HepG2 (cell line): ENCODE measurements at regions of chr11 and their contacts with region 1.

Region 1: GRCh38 chr11:61627567-61628445 is 46.9 kb upstream of the SYT7 start:
- DNase-seq: peak; percentile 57
- ATAC-seq: peak; percentile 93
- H3K4me3 ChIP-seq: no peak overlapping the region
- H3K27ac ChIP-seq: no peak overlapping the region
- H3K4me1 ChIP-seq: peaks cover 18% of the 10 kb centered on the region
- H3K27me3 ChIP-seq: peaks cover 0 to 2% of the 10 kb centered on the region in 2 experiments; a peak in 2 of 5 replicates
- CTCF ChIP-seq: peak; percentile 94
- EP300 ChIP-seq: no peak
- POLR2A ChIP-seq: no peak
- RAD21 ChIP-seq: peak; percentile 91

Region 2: GRCh38 chr11:61477727-61478148 is 150.1 kb before region 1 on chr11:
- CTCF ChIA-PET with region 1: interaction called, 3 read pairs
- POLR2A ChIA-PET with region 1: no interaction called
- in situ Hi-C with region 1: no loop called
- intact Hi-C with region 1: loop called (anchors 1 kb)
- DNase-seq: no peak
- ATAC-seq: peak; percentile 41
- H3K4me3 ChIP-seq: no peak overlapping the region
- H3K27ac ChIP-seq: no peak overlapping the region
- H3K4me1 ChIP-seq: peaks cover 27% of the 10 kb centered on the region
- H3K27me3 ChIP-seq: peaks cover 2 to 22% of the 10 kb centered on the region in 2 experiments; a peak in 4 of 5 replicates
- CTCF ChIP-seq: peak; percentile 94
- EP300 ChIP-seq: no peak
- POLR2A ChIP-seq: no peak
- RAD21 ChIP-seq: peak; percentile 94

Region 3: GRCh38 chr11:61532139-61533038 is 95.4 kb before region 1 on chr11:
- CTCF ChIA-PET with region 1: no interaction called
- POLR2A ChIA-PET with region 1: no interaction called
- in situ Hi-C with region 1: no loop called
- intact Hi-C with region 1: loop called (anchors 1 kb)
- DNase-seq: peak; percentile 34
- ATAC-seq: peak; percentile 48
- H3K4me3 ChIP-seq: no peak overlapping the region
- H3K27ac ChIP-seq: no peak overlapping the region
- H3K4me1 ChIP-seq: peaks cover 42% of the 10 kb centered on the region
- H3K27me3 ChIP-seq: peaks cover 0 to 6% of the 10 kb centered on the region in 2 experiments; a peak in 1 of 5 replicates
- CTCF ChIP-seq: peak; percentile 71
- EP300 ChIP-seq: no peak
- POLR2A ChIP-seq: no peak
- RAD21 ChIP-seq: peak; percentile 46; the same call in 1 of the 2 replicates

Region 4: DNA sequence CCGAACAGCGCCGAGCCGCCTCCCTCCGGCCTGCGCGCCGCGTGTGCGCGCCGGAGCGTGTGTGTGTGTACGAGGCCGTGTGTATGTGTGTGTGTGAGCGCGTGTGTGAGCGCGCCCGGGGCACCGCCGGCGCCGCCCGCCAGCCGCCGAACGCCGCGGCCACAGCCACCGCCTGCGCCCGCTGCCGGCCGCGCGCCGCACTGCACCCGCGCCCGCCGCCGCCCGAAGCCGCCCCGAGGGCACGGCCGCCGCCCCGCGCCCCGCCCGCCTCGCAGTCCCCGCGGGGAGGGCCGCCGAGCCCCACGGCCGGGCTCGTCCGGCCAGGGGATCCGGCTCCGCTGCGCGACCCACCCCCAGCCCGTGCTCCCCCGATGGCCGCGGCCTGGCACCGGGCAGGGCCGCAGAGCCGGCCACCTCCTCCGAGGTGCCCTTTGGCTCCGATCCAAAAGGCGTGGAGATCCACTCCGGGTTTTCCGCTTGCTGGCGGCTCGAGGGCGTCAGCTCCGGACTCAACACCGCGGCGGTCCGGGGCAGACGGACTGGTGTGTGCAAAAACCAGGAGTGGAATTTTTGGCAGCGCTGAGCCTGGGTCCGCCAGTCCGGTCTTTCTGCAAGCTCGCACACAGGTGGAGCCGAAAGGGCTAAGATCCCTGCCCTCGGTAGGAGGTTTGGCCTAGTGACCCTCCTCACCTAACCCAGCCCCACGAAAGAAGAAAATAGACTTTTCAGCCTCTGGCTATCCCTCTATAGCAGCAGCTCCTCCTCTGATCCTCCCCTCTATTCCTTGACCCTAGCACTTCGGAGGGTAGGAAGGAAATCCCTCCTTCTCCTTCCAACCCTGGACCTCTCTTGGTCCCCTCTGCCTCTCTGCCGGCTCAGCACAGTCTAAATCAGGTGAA is 46.5 kb before region 1 on chr11 and contains the start of gene SYT7:
- CTCF ChIA-PET with region 1: interaction called, 5 read pairs
- POLR2A ChIA-PET with region 1: no interaction called
- in situ Hi-C with region 1: no loop called
- intact Hi-C with region 1: loop called (anchors 2 kb)
- DNase-seq: peak; percentile 87
- ATAC-seq: peak; percentile 60
- H3K4me3 ChIP-seq: peak within 1 kb of the TSS; percentile 43 to 75 (median 52)
- H3K27ac ChIP-seq: no peak within 1 kb of the TSS
- H3K4me1 ChIP-seq: peaks cover 45% of the 10 kb centered on the region
- H3K27me3 ChIP-seq: peaks cover 5 to 43% of the 10 kb centered on the region in 2 experiments; a peak in 3 of 5 replicates
- CTCF ChIP-seq: peak; percentile 53
- EP300 ChIP-seq: no peak
- POLR2A ChIP-seq: no peak
- RAD21 ChIP-seq: peak; percentile 57
- total RNA-seq, gene SYT7: 0.81 and 1.4 TPM in 2 replicates

Region 5: DNA sequence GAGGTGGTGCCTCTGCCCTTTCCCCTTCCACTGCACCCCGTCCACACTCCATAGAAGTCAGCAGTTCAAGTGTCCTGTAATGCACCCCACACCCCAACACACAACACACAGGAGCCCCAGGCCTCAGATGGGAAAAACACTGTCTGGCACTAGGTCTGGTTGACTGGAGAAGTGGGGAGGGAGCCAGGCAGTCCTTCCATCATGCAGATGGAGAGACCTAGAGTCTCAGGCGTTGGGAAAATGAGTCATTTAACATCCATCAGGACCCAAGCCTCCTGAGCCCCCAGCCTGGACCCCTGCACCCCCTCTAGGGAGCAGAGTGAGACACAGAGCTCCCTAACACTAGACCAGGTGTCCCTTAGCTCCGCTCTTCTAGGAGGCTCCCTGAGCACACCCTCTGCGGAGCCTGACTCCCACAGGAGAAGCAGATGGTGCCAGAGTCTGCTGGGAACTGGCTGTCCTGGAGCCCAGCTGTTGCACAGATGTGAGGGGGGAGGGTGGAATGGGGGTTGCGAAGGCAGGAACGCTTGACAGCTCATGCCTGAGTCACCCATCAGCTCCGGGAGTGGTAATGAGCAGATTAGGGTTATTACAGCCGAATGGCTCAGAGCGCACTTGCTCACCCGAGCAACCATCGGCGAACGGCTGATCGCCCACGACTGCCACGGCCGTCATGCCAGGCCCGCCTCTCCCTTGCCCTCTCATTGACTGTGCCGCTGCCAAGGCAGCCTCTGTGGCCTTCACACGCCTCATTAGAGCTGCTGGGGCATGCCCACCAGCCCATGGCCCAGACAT is 24.8 kb before region 1 on chr11:
- CTCF ChIA-PET with region 1: no interaction called
- POLR2A ChIA-PET with region 1: no interaction called
- in situ Hi-C with region 1: no loop called
- intact Hi-C with region 1: no loop called
- DNase-seq: no peak
- ATAC-seq: no peak
- H3K4me3 ChIP-seq: no peak overlapping the region
- H3K27ac ChIP-seq: no peak overlapping the region
- H3K4me1 ChIP-seq: peaks cover 61% of the 10 kb centered on the region
- H3K27me3 ChIP-seq: peaks cover 5 to 67% of the 10 kb centered on the region in 2 experiments
- CTCF ChIP-seq: no peak
- EP300 ChIP-seq: no peak
- POLR2A ChIP-seq: no peak
- RAD21 ChIP-seq: no peak